ENCODE measurements at regions of chr15 and their contacts with region 1.

Region 1: GRCh38 chr15:81265944-81266775 is 57.8 kb downstream of the STARD5 start:
- DNase-seq: peak; percentile 92
- ATAC-seq: peak; percentile 93
- H3K4me3 Mint-ChIP-seq: peak overlapping the region; percentile 53
- H3K27ac Mint-ChIP-seq: peak overlapping the region; percentile 75
- H3K4me1 Mint-ChIP-seq: peaks cover 37% of the 10 kb centered on the region
- H3K27me3 Mint-ChIP-seq: peaks cover 2% of the 10 kb centered on the region

Region 2: GRCh38 chr15:80654299-80654698 is 611.9 kb before region 1 on chr15:
- CTCF ChIA-PET with region 1: no interaction called
- POLR2A ChIA-PET with region 1: no interaction called
- intact Hi-C with region 1: no loop called
- DNase-seq: no peak
- ATAC-seq: no peak
- H3K4me3 Mint-ChIP-seq: no peak overlapping the region
- H3K27ac Mint-ChIP-seq: no peak overlapping the region
- H3K4me1 Mint-ChIP-seq: no peaks in the 10 kb centered on the region
- H3K27me3 Mint-ChIP-seq: peaks cover 16% of the 10 kb centered on the region

Region 3: DNA sequence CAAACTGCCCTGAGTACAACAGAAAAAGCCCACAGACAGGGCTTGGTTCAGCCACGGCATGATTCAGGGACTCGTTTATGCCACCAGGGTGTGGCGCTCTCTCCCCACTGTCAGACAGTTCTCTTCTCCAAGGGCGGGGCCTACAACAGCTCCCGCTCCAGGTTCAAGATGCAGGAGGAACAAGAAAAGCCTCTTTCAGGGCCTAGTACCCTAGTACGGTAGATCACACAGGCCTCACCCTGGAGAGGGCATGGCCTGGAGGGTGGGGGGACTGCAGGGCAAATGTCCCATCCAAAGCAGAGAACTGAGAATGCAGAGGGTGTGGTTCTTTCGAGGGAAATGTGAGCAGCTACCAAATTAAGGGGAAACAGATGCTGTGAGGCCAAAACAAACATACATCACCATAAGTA is 288.5 kb before region 1 on chr15:
- CTCF ChIA-PET with region 1: interaction called, 58 read pairs
- POLR2A ChIA-PET with region 1: no interaction called
- intact Hi-C with region 1: loop called (anchors 1 to 2 kb)
- DNase-seq: peak; percentile 70
- ATAC-seq: peak; percentile 79
- H3K4me3 Mint-ChIP-seq: no peak overlapping the region
- H3K27ac Mint-ChIP-seq: peak overlapping the region; percentile 61
- H3K4me1 Mint-ChIP-seq: peaks cover 44% of the 10 kb centered on the region
- H3K27me3 Mint-ChIP-seq: no peaks in the 10 kb centered on the region

Region 4: DNA sequence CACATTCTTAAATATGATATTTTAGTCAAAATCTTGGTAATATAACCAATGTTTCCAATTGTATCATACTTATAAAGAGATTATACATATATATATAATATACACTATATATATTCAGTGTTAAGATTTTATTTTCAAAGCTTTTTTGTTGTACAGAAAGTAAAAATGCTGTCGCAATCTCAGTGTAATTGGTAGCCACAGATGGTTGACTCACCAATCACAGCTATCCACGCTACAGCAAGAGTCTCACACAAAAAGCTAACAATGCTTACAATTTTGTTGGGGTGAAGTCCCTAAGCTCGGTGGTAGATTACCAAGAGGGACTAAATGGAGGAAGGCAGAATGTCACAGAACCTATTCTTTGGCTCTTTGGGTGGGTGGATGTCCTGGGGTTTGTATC is 149.0 kb before region 1 on chr15:
- CTCF ChIA-PET with region 1: interaction called, 184 read pairs
- POLR2A ChIA-PET with region 1: no interaction called
- intact Hi-C with region 1: no loop called
- DNase-seq: no peak
- ATAC-seq: no peak
- H3K4me3 Mint-ChIP-seq: no peak overlapping the region
- H3K27ac Mint-ChIP-seq: no peak overlapping the region
- H3K4me1 Mint-ChIP-seq: no peaks in the 10 kb centered on the region
- H3K27me3 Mint-ChIP-seq: peaks cover 32% of the 10 kb centered on the region

Region 5: DNA sequence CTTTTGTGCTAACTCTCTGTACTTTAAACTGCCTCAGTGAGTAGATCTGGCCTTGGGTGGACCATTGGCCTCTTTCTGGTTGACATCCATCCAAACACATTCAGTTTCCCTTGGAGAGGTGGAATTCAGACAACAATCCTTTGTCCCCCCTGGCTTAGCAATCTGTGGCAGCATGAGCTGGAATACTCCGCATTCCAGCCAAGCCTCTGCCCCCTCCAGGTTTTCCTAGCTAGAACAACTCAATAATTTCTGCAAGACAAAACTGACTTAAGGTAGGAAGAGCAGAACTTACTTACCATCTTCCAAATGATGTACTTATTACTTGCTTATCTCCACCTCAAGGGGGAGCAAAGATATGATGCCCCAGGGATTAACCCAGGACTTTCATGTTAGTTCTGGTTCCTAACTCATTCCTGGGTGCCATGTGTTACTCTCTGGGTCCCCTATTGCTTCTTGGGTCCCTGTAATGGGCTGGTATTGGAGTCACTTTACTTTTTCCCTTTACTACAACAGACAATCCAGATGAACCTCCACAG is 91.3 kb before region 1 on chr15:
- CTCF ChIA-PET with region 1: interaction called, 15 read pairs
- POLR2A ChIA-PET with region 1: no interaction called
- intact Hi-C with region 1: no loop called
- DNase-seq: no peak
- ATAC-seq: no peak
- H3K4me3 Mint-ChIP-seq: no peak overlapping the region
- H3K27ac Mint-ChIP-seq: no peak overlapping the region
- H3K4me1 Mint-ChIP-seq: no peaks in the 10 kb centered on the region
- H3K27me3 Mint-ChIP-seq: peaks cover 13% of the 10 kb centered on the region

Region 6: DNA sequence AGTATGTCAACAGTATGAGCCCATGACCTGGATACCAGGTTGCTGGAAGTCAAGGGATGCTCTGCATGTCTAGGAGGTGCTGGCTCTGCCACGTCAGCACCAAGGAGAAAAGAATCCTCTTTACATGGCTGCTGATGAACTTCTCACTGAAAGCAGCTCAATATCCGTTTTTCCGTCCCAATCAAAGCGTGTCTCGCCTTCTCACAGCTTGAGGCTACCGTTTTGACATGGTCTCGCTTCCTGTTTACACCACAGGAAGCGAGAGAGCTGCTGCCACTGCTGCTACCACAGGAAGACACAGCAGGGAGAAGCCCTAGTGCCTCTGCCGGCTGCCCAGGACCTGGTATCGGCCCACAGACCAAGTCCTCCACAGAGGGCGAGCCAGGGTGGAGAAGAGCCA is 30.5 kb after region 1 on chr15:
- CTCF ChIA-PET with region 1: interaction called, 31 read pairs
- POLR2A ChIA-PET with region 1: interaction called, 3 read pairs
- intact Hi-C with region 1: no loop called
- DNase-seq: peak; percentile 86
- ATAC-seq: peak; percentile 54
- H3K4me3 Mint-ChIP-seq: peak overlapping the region; percentile 94
- H3K27ac Mint-ChIP-seq: peak overlapping the region; percentile 98
- H3K4me1 Mint-ChIP-seq: peaks cover 62% of the 10 kb centered on the region
- H3K27me3 Mint-ChIP-seq: no peaks in the 10 kb centered on the region

Region 7: GRCh38 chr15:81336568-81336967 is 70.4 kb after region 1 on chr15:
- CTCF ChIA-PET with region 1: interaction called, 22 read pairs
- POLR2A ChIA-PET with region 1: no interaction called
- intact Hi-C with region 1: no loop called
- DNase-seq: peak; percentile 52
- ATAC-seq: peak; percentile 51
- H3K4me3 Mint-ChIP-seq: no peak overlapping the region
- H3K27ac Mint-ChIP-seq: no peak overlapping the region
- H3K4me1 Mint-ChIP-seq: peaks cover 7% of the 10 kb centered on the region
- H3K27me3 Mint-ChIP-seq: no peaks in the 10 kb centered on the region

Region 8: DNA sequence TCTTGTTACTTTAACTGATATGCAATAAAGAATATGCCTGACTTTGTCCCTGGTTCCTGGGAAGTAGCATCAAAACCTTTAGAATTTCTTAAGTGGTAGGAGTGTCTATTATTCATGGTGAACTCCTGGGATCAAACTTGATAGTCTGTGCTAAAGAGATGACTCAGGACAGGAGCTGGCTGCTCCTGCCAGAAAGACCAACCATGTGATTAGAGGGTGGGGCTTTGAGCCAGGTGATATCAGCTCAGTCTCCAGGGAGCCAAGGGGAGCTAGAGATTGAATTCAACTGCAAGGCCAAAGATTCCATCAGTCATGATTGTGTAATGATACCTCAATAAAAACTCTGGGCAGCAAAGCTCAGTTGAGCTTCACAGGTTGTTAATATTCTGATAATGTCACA is 128.4 kb after region 1 on chr15:
- CTCF ChIA-PET with region 1: interaction called, 43 read pairs
- POLR2A ChIA-PET with region 1: no interaction called
- intact Hi-C with region 1: no loop called
- DNase-seq: no peak
- ATAC-seq: no peak
- H3K4me3 Mint-ChIP-seq: no peak overlapping the region
- H3K27ac Mint-ChIP-seq: no peak overlapping the region
- H3K4me1 Mint-ChIP-seq: no peaks in the 10 kb centered on the region
- H3K27me3 Mint-ChIP-seq: no peaks in the 10 kb centered on the region

Region 9: GRCh38 chr15:81776976-81777375 is 510.8 kb after region 1 on chr15:
- CTCF ChIA-PET with region 1: no interaction called
- POLR2A ChIA-PET with region 1: no interaction called
- intact Hi-C with region 1: no loop called
- DNase-seq: no peak
- ATAC-seq: no peak
- H3K4me3 Mint-ChIP-seq: no peak overlapping the region
- H3K27ac Mint-ChIP-seq: no peak overlapping the region
- H3K4me1 Mint-ChIP-seq: peaks cover 3% of the 10 kb centered on the region
- H3K27me3 Mint-ChIP-seq: peaks cover 13% of the 10 kb centered on the region